Mammary epithelial cell (primary cell): ENCODE measurements at regions of chr11 and their contacts with region 1.

Region 1: DNA sequence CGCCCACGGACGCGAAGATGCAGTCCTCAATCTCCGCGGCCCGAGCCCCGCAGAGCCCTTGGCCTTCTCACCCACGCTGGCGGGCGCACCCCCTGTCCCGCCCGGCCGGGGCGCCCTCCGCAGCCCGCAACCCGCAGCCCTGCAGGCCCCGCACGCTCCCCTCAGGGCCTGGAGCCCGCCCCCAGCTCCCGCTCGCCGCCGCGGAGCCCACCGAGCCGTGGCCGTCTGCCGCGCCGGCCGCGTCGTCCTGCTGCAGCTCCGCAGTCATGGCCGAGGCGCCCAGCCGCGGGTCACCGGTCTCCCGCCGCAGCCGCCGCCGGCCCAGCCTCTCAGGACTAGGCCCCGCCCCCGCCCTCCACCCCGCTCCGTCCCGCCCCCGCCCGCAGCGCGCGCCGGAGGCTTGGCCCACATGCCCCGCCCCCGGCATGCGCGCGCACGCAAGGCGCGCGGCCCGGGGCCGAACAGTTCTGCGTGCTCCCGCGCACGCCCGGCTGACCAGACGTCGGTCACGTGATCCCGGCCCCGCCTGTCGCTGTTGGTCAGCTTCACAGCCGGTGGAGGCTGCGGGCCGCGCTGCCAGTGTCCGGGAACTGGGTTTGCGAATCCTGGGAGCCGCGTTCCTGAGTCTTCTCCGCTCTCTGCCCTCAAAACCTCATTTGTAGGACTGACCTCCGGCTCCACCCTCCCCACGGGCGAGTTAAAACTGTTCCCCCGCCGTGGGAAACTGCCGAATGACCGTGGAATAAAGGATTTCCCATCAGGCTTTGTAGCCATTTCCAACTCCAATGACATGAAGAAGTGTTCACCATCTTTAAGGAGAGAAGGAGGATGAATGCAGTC is at the start of gene USP28:
- DNase-seq: peak; percentile 92
- H3K4me3 ChIP-seq: peak within 1 kb of the TSS; percentile 70 to 87 (median 79)
- H3K27ac ChIP-seq: peak within 1 kb of the TSS; percentile 79
- H3K4me1 ChIP-seq: peaks cover 8% of the 10 kb centered on the region
- H3K27me3 ChIP-seq: no peaks in the 10 kb centered on the region
- CTCF ChIP-seq: peak in 1 of 2 donors; percentile 22
- total RNA-seq, gene USP28: 30.3 to 31.7 TPM

Region 2: DNA sequence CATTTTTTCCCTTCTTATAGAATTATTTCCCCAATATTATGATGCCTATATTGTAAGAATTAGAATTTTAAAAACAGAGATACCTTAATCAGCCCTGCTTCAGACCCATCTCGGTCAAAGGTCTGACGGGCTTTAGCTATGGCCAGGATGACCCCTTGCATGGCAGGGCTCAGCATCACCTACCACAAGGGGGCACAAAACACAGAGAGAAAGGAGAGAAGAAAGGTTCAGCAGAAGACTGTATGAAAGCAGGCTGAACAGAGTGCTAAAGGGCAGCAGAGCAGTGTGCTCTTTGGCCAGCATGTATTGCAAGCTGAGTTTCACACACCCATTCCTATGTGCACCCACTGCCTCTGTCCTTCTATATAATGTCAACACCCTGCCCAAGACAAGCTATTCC is 69.0 kb before region 1 on chr11:
- CTCF ChIA-PET with region 1: no interaction called
- dilution Hi-C with region 1: no loop called
- in situ Hi-C with region 1: no loop called
- intact Hi-C with region 1: loop called (anchors 2 kb)
- DNase-seq: peak; percentile 21
- H3K4me3 ChIP-seq: no peak overlapping the region
- H3K27ac ChIP-seq: no peak overlapping the region
- H3K4me1 ChIP-seq: no peaks in the 10 kb centered on the region
- H3K27me3 ChIP-seq: no peaks in the 10 kb centered on the region
- CTCF ChIP-seq: peak; percentile 48 to 59

Region 3: DNA sequence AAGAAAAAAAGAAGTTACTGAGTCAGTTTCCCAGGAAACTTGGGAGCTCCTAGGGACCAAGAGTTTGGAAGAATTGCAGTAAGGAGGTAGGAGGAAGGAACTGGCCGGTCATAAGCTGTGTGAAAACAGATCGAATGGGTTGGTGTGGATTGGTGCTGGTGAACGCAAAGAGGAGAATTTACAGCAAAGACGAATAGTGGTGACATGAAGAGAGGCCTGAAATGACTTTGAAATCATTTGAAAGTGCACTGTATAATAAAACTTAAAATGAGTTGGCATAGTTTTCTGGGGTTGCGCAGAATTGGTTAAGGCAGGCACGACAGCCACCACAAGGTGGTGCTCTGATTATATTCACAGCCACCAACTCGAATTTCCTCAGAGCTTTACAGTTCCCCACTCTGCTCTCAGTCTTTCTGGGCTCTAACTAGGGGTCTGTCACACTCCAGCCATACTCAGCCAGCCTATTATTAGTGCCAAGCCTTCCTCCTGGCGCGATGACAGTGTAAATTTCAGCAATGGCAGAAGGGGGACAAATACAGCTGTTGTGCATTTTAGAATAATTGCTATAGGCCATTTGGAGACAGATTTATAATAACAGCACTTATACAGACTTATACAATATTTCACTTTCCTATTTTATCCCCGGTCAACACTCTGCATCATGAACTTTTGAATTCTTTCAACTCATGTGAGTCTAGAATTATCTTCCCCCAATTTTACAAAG is 20.9 kb after region 1 on chr11:
- CTCF ChIA-PET with region 1: interaction called, 18 read pairs
- dilution Hi-C with region 1: no loop called
- in situ Hi-C with region 1: no loop called
- intact Hi-C with region 1: no loop called
- DNase-seq: no peak
- H3K4me3 ChIP-seq: no peak overlapping the region
- H3K27ac ChIP-seq: no peak overlapping the region
- H3K4me1 ChIP-seq: no peaks in the 10 kb centered on the region
- H3K27me3 ChIP-seq: no peaks in the 10 kb centered on the region
- CTCF ChIP-seq: peak; percentile 68 to 74